Activated T-helper 1 cell treated with anti-CD3 and anti-CD28 coated beads, Interleukin-12 subunit alpha, Interleukin-12 subunit beta, Interleukin-2, Interleukin-4 antibody, amounts not matched to agents 30 ng/mL and 10 ng/mL and 1 ng/mL, durations not matched to agents 14 hours and 24 hours and 36 hours (primary cell): ENCODE measurements at regions of chr1 and their contacts with region 1.

Region 1: GRCh38 chr1:116934586-116935207 is 25.0 kb downstream of the PTGFRN start:
- DNase-seq: no peak
- H3K4me3 Mint-ChIP-seq: peak overlapping the region; percentile 25
- H3K27ac Mint-ChIP-seq: peak overlapping the region; percentile 75
- H3K4me1 Mint-ChIP-seq: peaks cover 27% of the 10 kb centered on the region
- H3K27me3 Mint-ChIP-seq: no peaks in the 10 kb centered on the region

Region 2: DNA sequence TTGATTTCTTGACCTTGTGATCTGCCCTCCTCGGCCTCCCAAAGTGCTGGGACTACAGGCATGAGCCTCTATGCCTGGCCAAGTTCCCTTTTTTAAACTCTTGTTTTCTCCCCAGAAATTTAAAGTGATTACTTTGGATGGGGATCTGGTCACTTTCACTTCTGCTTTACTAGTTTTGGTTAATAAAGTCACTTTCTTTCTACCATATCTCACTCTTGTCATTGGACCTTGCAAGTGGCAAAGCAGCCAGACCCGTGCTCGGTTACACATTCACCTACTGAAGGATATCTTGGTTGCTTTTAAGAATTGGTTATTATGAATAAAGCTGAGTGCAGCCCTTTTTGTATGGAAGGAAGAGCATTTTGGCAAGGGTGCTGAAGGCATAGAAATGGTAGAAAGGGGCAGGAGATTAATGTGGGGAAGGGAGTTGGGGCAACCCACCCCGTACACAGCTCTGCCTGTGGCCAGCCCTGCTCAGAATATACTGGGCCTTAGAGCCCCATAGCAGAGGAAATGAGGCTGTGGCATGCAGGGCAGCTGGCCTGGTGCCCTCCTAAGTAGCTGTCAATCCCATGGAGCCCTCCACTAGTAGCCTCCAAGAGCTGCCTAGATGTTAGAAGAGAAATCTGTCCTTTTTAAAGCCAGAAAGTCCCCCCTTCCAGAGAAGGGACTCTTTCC is 139.8 kb before region 1 on chr1:
- intact Hi-C with region 1: no loop called
- DNase-seq: no peak
- H3K4me3 Mint-ChIP-seq: no peak overlapping the region
- H3K27ac Mint-ChIP-seq: no peak overlapping the region
- H3K4me1 Mint-ChIP-seq: peaks cover 68% of the 10 kb centered on the region
- H3K27me3 Mint-ChIP-seq: no peaks in the 10 kb centered on the region

Region 3: DNA sequence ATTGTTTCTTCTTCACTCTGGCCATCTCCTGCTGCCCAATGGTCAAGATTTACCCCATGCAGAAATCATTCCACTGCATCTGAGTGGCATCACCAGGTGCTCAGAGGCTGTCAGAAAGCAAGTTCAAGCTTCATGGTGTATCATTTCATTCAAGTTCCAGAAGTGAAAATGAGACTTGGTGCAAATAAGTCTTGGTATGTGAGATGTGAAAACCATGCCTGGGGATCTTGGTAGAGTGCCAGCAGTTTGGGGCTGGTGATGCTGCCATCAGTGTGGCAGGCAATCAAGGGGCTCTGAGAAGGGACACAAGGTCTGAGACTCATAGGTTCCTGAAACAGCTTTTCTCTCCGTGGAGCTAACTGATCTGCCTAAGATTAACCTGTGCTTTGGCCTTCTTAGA is 128.5 kb before region 1 on chr1:
- intact Hi-C with region 1: no loop called
- DNase-seq: peak; percentile 40
- H3K4me3 Mint-ChIP-seq: peak overlapping the region; percentile 71
- H3K27ac Mint-ChIP-seq: peak overlapping the region; percentile 94
- H3K4me1 Mint-ChIP-seq: peaks cover 93% of the 10 kb centered on the region
- H3K27me3 Mint-ChIP-seq: no peaks in the 10 kb centered on the region

Region 4: DNA sequence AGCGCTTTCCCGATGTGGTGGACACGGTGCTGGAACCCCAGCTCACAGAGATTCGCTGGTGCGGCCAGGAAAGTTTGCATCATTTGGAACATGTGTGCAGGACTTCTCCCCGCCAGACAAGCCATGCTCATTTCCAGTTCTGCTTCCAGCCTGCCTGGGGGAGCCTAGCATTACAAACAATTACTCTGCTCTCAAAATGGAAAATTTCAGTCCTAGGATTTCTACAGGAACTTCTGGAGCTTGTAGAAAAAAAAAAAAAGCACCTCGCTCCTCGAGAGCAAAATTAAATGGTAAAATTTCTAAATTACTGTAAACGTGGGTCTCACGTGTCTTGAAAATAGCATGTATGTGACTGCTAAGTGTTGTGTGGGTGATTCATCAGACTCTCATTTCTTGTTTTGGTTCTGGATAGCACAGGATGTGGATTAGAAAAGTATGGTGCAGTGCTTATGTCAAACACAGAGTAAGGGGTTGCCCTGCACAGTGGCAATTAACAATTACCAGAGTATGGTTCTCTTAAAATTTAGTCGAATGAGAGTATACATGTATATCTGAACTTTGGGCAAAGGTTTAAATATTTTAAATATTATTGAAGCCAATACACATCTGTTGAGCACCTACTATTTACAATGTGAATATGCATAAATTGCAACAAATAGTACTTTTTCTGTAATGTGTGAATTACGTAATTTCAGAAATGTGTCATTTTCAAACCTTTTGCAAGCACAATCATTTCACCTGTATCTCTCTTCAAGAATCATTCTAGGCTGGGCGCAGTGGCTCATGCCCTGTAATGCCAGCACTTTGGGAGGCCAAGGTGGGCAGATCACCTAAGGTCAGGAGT is 86.8 kb before region 1 on chr1:
- intact Hi-C with region 1: loop called (anchors 1 kb)
- DNase-seq: no peak
- H3K4me3 Mint-ChIP-seq: no peak overlapping the region
- H3K27ac Mint-ChIP-seq: peak overlapping the region; percentile 38
- H3K4me1 Mint-ChIP-seq: peaks cover 34% of the 10 kb centered on the region
- H3K27me3 Mint-ChIP-seq: no peaks in the 10 kb centered on the region

Region 5: DNA sequence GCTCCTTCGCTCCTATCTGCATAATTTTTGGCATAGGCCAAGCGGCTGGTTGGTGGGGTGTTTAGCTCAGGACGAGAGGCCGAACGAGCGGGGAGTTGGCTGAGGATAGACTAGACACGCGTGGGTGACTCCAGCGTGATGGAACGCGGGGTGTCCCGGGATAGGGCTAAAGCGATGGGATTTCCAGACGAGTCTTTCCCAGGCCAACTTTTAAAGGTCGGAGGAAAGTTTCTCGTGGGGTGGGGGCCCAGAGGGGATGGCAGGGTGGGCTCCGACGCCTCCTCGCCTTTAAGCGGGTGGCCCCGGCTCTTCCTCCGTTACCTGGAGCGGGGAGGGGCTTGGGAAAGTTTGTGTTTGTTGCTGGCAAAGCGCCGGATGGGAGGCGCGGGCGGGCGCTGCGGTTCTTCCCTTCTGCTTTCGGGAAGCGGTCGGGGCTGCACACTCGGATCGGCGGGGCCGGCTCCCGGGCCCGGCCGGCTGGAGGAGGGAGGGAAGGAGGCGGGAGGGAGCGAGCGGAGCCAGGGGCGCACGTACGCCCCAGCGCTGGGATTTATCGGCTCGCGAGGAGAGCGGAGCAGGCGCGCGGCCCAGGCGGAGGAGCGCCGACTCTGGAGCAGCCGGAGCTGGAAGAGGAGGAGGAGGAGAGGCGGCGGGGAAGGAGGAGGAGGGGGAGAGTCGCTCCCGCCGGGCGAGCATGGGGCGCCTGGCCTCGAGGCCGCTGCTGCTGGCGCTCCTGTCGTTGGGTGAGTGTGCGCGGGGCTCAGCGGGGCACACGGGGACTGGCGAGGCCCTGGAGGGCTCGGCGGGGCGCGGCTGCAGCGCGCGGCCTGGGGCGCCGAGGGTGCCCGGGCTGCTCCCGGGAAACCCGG is 25.0 kb before region 1 on chr1 and contains the start of gene PTGFRN:
- intact Hi-C with region 1: loop called (anchors 1 kb)
- DNase-seq: no peak
- H3K4me3 Mint-ChIP-seq: peak within 1 kb of the TSS; percentile 87
- H3K27ac Mint-ChIP-seq: peak within 1 kb of the TSS; percentile 75
- H3K4me1 Mint-ChIP-seq: peaks cover 9% of the 10 kb centered on the region
- H3K27me3 Mint-ChIP-seq: peaks cover 4% of the 10 kb centered on the region
- total RNA-seq, gene PTGFRN: 38.0 and 43.4 TPM in 2 replicates

Region 6: GRCh38 chr1:116987256-116987555 is 52.5 kb after region 1 on chr1:
- intact Hi-C with region 1: loop called (anchors 5 kb)
- DNase-seq: peak; percentile 48
- H3K4me3 Mint-ChIP-seq: peak overlapping the region; percentile 80
- H3K27ac Mint-ChIP-seq: peak overlapping the region; percentile 92
- H3K4me1 Mint-ChIP-seq: peaks cover 49% of the 10 kb centered on the region
- H3K27me3 Mint-ChIP-seq: no peaks in the 10 kb centered on the region